ENCODE measurements at regions of chr1 and their contacts with region 1.

Region 1: DNA sequence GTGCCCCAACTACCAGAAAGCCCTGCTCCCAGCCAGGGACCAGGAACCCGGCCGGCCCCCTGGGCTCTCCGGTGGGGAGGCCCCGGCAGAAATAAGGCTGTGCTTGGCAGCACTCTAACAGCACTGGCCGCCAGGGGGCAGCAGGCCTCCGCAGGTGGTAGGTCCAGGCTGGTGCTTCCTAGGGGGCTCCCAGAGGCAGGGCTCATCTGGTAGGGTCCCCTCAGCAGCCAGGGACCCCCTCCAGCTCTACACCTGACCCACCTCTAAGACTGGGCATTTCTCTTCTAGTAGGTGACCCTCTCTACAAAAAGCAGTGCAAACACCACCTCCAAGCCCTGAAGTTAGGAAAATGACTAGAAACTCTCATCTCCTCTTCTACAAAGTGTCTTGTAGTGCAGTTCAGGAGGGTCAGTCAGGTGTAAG is 85.6 kb downstream of the STUM start:
- DNase-seq: peak; percentile 42
- H3K4me3 ChIP-seq: no peak overlapping the region
- H3K27ac ChIP-seq: no peak overlapping the region
- H3K27me3 ChIP-seq: no peaks in the 10 kb centered on the region
- CTCF ChIP-seq: peak; percentile 93

Region 2: DNA sequence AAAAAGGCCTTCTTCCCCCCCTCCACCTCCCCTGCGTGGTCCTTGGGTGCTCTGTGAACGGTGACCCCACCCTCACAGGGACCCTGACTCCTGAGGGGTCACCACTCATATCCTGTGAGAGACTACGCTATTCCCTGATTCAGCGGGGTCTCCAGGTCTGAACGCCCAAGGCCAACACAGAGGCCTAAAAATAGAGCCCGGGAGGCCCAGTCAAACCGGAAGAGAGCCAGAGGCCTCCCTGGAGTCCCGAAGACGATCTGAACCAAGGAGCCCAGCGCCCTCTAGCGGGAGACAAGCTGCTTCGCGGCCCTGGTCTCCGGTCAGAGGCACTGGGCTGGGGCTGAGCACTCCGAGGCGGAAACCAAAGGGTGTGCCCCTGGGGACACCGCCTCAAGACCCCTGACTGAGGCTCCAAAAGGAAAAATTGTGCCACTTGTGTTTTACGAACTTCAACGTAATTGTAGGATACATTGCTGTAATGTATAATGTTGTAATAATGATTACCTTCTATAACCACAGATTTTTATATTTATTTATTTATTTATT is 193.9 kb after region 1 on chr1:
- in situ Hi-C with region 1: loop called (anchors 25 kb)
- DNase-seq: peak; percentile 87
- H3K4me3 ChIP-seq: no peak overlapping the region
- H3K27ac ChIP-seq: peak overlapping the region; percentile 62
- H3K27me3 ChIP-seq: no peaks in the 10 kb centered on the region
- CTCF ChIP-seq: peak; percentile 96

Region 3: DNA sequence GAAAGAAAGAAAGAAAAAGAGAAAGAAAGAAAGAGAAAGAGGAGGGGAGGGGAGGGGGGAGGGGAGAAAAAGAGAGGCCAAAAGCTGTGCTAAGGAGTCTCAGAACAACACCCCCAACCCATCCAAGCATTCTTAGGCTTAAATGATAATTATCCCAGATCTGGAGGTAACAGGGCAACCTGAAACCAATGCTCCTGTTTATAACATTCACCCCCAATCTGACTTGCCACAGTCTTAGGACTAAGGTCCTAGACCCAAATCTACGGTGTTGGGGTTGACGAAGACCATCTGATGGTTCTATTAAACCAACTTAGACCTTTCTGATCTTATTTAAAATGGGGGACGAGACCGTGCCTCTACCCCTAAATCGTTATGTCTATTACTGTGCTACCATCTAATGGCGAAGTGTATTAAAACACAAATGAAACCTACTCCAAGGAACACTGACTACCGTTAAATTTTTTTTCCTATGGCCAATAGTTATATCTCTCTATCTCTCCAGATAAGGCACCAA is 803.4 kb after region 1 on chr1:
- in situ Hi-C with region 1: loop called (anchors 25 kb)
- DNase-seq: peak; percentile 31
- H3K4me3 ChIP-seq: peak overlapping the region; percentile 38
- H3K27ac ChIP-seq: no peak overlapping the region
- H3K27me3 ChIP-seq: no peaks in the 10 kb centered on the region
- CTCF ChIP-seq: peak; percentile 33